ENCODE measurements at regions of chr9 and their contacts with region 1.

Region 1: GRCh38 chr9:114681594-114682332 is at the start of gene TEX48:
- DNase-seq: peak; percentile 64
- H3K4me3 ChIP-seq: peak within 1 kb of the TSS in 1 of 2 experiments; percentile 21; a peak in 1 of 4 replicates
- H3K27ac ChIP-seq: peak within 1 kb of the TSS in 1 of 2 experiments; percentile 23; a peak in 2 of 4 replicates
- H3K4me1 ChIP-seq: peaks cover 0 to 17% of the 10 kb centered on the region in 2 experiments; a peak in 3 of 4 replicates
- H3K27me3 ChIP-seq: no peaks in the 10 kb centered on the region
- CTCF ChIP-seq: peak; percentile 72
- EP300 ChIP-seq: no peak
- RAD21 ChIP-seq: peak; percentile 78
- polyA plus RNA-seq, gene TEX48: 0.41 and 0.46 TPM in 2 replicates

Region 2: DNA sequence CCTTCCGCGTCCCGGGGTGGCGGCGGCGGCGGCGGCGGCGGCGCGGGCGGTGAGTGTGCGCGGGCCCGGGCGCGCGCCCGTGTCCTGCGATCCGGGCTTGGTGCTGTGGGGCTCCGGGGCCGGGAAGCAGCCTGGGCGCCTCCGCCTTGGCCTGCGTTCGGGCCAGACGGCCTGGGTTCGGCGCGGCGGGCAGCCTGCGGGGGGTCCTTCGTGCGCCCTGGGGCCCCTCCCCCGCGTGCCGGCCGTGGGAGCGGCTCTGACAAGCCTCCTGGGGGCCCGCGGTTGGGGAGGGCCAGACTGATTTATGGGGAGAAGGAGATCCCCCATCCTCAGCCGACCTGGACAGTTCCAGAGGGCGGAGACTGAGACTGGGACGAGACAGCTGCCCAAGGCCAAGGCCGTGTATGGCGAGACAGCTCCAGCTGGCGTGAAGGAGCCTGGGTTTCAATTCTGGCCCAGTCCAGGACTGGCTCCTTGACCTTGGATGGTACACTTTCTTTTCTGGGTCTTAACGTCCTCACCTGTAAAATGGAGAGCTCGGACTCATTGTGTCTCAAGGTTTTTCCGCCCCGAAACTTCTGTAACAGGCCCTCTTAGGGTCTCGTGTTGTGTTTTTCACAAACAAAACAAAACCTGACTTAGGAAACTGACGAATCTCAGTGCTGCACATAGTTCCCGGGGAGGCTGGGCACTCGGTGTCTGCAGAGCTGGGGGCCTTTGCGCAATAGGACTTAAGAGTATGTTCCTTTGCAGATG is 70.1 kb before region 1 on chr9:
- CTCF ChIA-PET with region 1: no interaction called
- POLR2A ChIA-PET with region 1: no interaction called
- DNase-seq: no peak
- H3K4me3 ChIP-seq: peak overlapping the region; percentile 61 to 86
- H3K27ac ChIP-seq: peak overlapping the region; percentile 54 to 69
- H3K4me1 ChIP-seq: peaks cover 4 to 15% of the 10 kb centered on the region in 2 experiments; a peak in 1 of 4 replicates
- H3K27me3 ChIP-seq: no peaks in the 10 kb centered on the region
- CTCF ChIP-seq: no peak
- EP300 ChIP-seq: no peak
- RAD21 ChIP-seq: no peak

Region 3: DNA sequence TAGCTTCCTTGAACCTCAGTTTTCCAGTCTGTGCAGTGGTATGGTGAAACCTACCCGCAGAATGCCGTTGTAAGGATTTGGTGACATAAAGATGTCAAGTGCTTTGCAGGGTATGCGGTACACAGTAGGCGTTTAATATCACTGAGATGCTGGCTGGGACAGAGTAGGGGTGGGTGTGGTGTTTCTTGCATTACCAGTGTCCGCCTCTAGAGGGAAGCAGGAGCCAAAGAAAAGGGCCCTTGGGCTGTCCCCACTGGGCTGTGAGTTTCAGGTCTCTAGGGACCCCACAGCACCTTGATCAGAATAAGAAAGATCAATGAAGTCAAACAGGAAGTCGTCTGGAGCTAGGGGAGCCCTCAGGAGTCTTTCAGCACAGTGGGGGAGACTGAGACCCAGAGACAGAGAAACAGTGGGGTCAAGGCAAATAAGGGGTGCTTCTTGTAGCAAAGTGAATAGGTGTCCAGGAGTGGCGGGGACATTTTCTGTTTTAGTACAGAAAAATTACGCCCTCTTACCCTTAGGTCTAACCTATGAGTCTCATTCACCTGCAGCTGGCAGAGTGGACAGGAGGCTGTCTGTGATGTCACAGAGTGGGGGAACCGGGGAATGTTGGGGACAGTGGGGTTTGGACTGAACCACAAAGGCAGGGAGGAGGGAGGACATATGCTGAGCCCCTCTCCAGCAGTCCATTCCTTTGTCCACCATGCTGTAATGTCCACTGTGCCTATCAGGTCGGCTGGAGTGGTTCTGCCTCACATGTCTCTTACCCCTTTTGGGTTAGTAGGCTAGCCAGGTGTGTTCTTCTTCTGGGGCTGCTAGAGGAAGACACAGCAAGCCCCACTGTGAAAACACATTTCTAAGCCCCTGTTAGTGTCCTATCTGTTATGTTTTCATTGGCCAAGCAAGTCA is 19.4 kb before region 1 on chr9:
- CTCF ChIA-PET with region 1: interaction called, 29 read pairs
- POLR2A ChIA-PET with region 1: no interaction called
- DNase-seq: peak; percentile 77
- H3K4me3 ChIP-seq: no peak overlapping the region
- H3K27ac ChIP-seq: no peak overlapping the region
- H3K4me1 ChIP-seq: no peaks in the 10 kb centered on the region
- H3K27me3 ChIP-seq: no peaks in the 10 kb centered on the region; the same call in 1 of the 2 replicates
- CTCF ChIP-seq: peak; percentile 89
- EP300 ChIP-seq: no peak
- RAD21 ChIP-seq: peak; percentile 78

Region 4: GRCh38 chr9:114696814-114697544 is 15.2 kb after region 1 on chr9:
- CTCF ChIA-PET with region 1: interaction called, 26 read pairs
- POLR2A ChIA-PET with region 1: no interaction called
- DNase-seq: no peak
- H3K4me3 ChIP-seq: no peak overlapping the region
- H3K27ac ChIP-seq: peak overlapping the region in 1 of 2 experiments; percentile 18; a peak in 1 of 4 replicates
- H3K4me1 ChIP-seq: peaks cover 0 to 44% of the 10 kb centered on the region in 2 experiments; a peak in 3 of 4 replicates
- H3K27me3 ChIP-seq: no peaks in the 10 kb centered on the region
- CTCF ChIP-seq: no peak
- EP300 ChIP-seq: peak in 1 of 2 experiments; percentile 58; a peak in 1 of 4 replicates
- RAD21 ChIP-seq: no peak

Region 5: DNA sequence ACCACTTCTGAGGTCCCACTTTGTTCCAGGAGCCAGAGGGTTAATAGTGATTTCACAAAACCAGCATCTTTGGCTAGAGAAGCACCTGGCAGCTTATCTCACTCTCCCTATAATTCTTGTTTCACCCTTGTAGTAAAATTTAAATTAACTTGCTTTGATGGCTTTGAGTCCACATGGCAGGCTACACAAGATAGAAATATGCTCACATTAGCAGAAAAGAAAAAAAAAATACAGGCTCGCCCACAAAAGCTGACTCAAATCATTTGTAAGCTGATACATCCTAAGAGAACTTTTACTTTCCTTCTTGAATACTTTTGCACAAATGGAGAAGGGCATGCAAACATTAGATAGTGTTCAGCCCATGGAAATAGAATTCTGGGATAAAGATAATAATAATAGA is 87.9 kb after region 1 on chr9:
- CTCF ChIA-PET with region 1: no interaction called
- POLR2A ChIA-PET with region 1: no interaction called
- DNase-seq: no peak
- H3K4me3 ChIP-seq: no peak overlapping the region
- H3K27ac ChIP-seq: no peak overlapping the region
- H3K4me1 ChIP-seq: no peaks in the 10 kb centered on the region
- H3K27me3 ChIP-seq: 0 out of 2 replicates have a peak, but pooled peaks cover 7% of the 10 kb centered on the region
- CTCF ChIP-seq: no peak
- EP300 ChIP-seq: no peak
- RAD21 ChIP-seq: no peak

Region 6: DNA sequence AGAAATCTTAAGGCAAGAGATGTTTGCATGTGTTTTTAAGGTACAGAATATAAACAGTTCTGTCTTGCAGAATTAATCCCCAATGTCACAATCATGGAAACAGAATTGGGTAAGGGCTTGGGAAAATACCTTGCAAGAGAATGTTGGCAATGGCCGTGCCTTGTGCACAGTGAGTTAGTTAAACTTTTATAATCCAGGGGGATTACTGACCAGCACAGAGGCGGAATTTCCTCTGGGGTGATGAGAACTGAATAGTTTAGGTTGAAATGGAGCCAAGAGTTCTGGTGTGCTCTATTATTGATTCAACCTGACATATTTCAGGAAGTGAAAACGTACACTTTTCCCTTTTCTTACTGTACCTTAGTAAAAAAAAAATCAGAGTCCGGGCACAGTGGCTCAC is 104.5 kb after region 1 on chr9:
- CTCF ChIA-PET with region 1: no interaction called
- POLR2A ChIA-PET with region 1: no interaction called
- DNase-seq: no peak
- H3K4me3 ChIP-seq: no peak overlapping the region
- H3K27ac ChIP-seq: no peak overlapping the region
- H3K4me1 ChIP-seq: peaks cover 0 to 2% of the 10 kb centered on the region in 2 experiments; a peak in 2 of 4 replicates
- H3K27me3 ChIP-seq: no peaks in the 10 kb centered on the region
- CTCF ChIP-seq: no peak
- EP300 ChIP-seq: no peak
- RAD21 ChIP-seq: no peak

Region 7: DNA sequence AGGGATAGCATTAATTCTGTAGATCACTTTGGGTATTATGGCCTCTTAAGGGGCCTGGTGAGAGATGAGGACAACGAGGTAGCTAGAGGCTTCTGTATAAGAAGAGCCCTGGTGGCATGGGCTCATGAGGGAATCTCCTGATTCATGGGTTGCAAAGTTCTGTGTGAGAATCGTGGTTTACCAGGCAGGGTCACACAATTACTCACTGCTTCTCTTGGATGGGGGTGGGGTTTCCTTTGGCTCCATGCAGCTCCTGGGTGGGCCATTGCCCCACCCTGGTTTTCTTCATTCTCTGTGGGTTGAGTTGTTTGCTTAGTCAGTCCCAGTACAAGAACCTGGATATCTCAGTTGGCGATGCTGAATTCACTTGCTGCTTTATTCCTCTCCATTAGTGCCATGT is 155.0 kb after region 1 on chr9:
- CTCF ChIA-PET with region 1: no interaction called
- POLR2A ChIA-PET with region 1: no interaction called
- DNase-seq: no peak
- H3K4me3 ChIP-seq: no peak overlapping the region
- H3K27ac ChIP-seq: no peak overlapping the region
- H3K4me1 ChIP-seq: no peaks in the 10 kb centered on the region
- H3K27me3 ChIP-seq: no peaks in the 10 kb centered on the region
- CTCF ChIP-seq: no peak
- EP300 ChIP-seq: no peak
- RAD21 ChIP-seq: no peak

Region 8: GRCh38 chr9:115006660-115007059 is 324.9 kb after region 1 on chr9:
- CTCF ChIA-PET with region 1: interaction called, 14 read pairs
- POLR2A ChIA-PET with region 1: no interaction called
- DNase-seq: no peak
- H3K4me3 ChIP-seq: no peak overlapping the region
- H3K27ac ChIP-seq: no peak overlapping the region
- H3K4me1 ChIP-seq: 0 out of 4 replicates have a peak, but pooled peaks cover 0 to 5% of the 10 kb centered on the region in 2 experiments
- H3K27me3 ChIP-seq: no peaks in the 10 kb centered on the region
- CTCF ChIP-seq: no peak
- EP300 ChIP-seq: no peak
- RAD21 ChIP-seq: no peak

Measured in SK-N-SH (cell line).